Posterior vena cava (tissue), 2 donors: ENCODE measurements at regions of chr12 and their contacts with region 1.

Region 1: GRCh38 chr12:24551163-24551786 is 397.6 kb downstream of the BCAT1 start:
- DNase-seq: no peak

Region 2: DNA sequence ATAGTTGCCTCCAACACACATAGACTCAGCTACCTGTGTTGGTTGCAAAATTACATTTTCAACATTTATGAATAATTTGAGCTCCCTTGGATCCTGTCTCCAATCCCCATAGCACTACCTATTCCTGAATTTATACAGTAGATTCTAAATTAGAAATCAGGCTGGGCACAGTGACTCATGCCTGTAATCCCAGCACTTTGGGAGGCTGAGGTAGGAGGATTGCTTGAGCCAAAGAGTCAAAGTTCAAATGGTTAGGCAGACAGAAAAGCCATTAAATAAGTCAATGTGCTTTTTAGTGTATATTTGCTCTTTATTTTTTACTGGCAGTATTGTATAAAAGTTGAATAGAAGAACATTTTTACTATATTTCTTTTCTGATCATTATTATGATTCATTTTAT is 1982.0 kb before region 1 on chr12:
- intact Hi-C with region 1: loop called in 1 of 2 experiments (anchors 5 kb)
- DNase-seq: no peak

Region 3: GRCh38 chr12:24360907-24361306 is 190.4 kb before region 1 on chr12:
- intact Hi-C with region 1: no loop called
- DNase-seq: no peak

Region 4: GRCh38 chr12:24479131-24479530 is 72.1 kb before region 1 on chr12:
- intact Hi-C with region 1: loop called in 1 of 2 experiments (anchors 2 kb)
- DNase-seq: no peak